Naive thymus-derived CD4-positive, alpha-beta T cell (primary cell): ENCODE measurements at regions of chr3 and their contacts with region 1.

Region 1: DNA sequence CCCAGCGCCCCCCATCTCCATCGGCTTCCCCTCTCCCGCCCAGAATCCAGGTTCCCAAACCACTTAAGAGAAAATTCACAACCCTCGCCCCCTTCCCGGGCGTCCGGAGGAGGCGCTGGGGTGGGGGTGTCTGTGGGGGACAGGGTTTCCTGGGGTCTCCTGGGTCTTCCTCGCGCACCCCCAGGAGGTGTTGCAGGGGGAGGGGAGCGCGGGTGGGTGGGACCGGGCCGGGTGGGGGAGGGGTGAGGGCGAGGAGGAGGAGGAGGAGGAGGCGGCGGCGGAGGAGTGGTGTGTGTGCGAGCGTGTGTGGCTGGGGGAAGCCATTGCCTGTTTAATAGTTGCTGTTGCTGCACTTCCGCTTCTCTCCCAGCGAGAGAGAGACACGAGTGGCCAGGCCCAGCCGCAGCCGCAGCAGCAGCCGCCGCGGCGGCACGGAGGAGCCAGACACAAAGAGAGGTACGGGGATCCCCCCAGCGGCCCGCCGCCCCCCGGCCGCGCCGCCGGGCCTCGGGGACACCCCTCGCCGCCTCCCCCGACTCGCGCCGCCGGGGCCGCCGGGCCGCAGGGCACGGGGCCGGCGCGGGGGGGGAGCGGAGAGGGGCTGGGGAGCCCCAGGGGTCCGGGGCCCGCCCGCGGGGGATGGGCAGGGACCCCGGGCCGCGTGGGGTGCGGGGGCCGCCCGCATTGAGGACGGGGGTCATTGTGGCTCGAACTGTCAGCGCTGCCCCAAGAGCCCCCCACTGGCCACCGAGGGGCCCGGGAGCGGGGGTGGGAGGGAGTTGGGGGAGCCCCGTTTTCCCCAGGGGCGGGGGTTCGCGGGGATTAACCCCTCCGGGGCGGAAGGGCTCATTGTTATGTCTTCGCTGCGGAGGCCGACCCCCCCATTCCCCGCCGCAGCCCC is at the start of gene UBE2E1:
- DNase-seq: peak; percentile 56 to 82 (median 73)
- ATAC-seq: peak; percentile 91
- H3K4me3 ChIP-seq: peak within 1 kb of the TSS; percentile 57
- H3K4me3 Mint-ChIP-seq: peak within 1 kb of the TSS; percentile 89 to 100 (median 94)
- H3K27ac ChIP-seq: peak within 1 kb of the TSS; percentile 77
- H3K27ac Mint-ChIP-seq: peak within 1 kb of the TSS; percentile 91 to 98 (median 95)
- H3K4me1 ChIP-seq: peaks cover 20 to 21% of the 10 kb centered on the region in 2 donors
- H3K4me1 Mint-ChIP-seq: peaks cover 28 to 48% (median 44%) of the 10 kb centered on the region in 7 donors
- H3K27me3 ChIP-seq: no peaks in the 10 kb centered on the region
- H3K27me3 Mint-ChIP-seq: peaks cover 0 to 31% (median 0%) of the 10 kb centered on the region in 5 donors
- total RNA-seq, gene UBE2E1: 59.0 to 80.0 (median 69.2) TPM

Region 2: DNA sequence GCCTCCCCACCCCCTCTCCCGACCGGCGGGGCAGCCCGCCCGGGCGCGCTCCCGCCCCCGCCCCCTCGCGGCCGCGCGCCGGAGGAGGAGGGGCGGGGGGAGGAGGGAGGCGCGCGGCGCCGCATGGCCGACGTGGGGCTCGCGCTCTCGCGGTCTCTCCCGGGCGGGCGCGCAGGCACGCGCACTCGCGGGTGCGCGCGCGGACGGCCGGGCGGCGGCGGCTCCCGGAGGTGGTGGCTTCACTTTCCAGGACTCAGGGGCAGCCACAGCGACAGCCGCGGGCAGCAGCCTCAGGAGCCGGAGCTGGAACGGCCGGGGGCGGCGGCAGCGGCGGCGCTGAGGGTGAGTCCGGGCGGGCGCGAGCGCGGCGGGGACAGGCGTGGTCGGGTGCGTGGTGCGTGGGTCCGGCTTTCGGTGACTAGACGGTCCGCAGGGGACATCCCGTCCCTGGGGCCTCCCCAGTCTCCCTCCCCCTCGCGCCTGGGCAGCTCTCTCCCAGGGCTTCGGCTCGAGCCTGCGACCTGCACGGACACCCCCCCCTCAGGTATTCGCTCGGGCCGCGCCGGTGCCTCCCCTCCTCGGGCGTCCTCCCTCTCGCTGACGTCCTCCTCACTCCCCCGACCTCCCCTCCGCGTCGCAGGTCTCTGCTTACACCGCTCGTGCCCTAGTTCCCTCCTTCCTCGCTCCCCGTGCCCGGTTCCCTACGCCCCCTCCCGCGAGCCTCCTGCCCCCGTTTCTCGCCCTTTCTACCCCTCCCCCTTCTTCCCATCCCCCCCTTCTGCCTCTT is 602.8 kb before region 1 on chr3 and contains the start of gene UBE2E2:
- CTCF ChIA-PET with region 1: no interaction called
- POLR2A ChIA-PET with region 1: no interaction called
- intact Hi-C with region 1: loop called in 1 of 2 experiments (anchors 1 kb)
- DNase-seq: peak; percentile 54 to 76 (median 72)
- ATAC-seq: peak; percentile 89
- H3K4me3 ChIP-seq: peak within 1 kb of the TSS; percentile 68
- H3K4me3 Mint-ChIP-seq: peak within 1 kb of the TSS; percentile 87 to 98 (median 94)
- H3K27ac ChIP-seq: peak within 1 kb of the TSS; percentile 76
- H3K27ac Mint-ChIP-seq: peak within 1 kb of the TSS; percentile 48 to 94 (median 85)
- H3K4me1 ChIP-seq: peaks cover 0 to 4% of the 10 kb centered on the region in 2 donors
- H3K4me1 Mint-ChIP-seq: peaks cover 14 to 32% (median 21%) of the 10 kb centered on the region in 7 donors
- H3K27me3 ChIP-seq: peaks cover 0 to 8% of the 10 kb centered on the region in 2 donors
- H3K27me3 Mint-ChIP-seq: peaks cover 0 to 38% (median 5%) of the 10 kb centered on the region in 5 donors
- total RNA-seq, gene UBE2E2: 2.4 to 28.8 (median 10.9) TPM

Region 3: GRCh38 chr3:23629181-23629893 is 176.5 kb before region 1 on chr3:
- CTCF ChIA-PET with region 1: no interaction called
- POLR2A ChIA-PET with region 1: no interaction called
- intact Hi-C with region 1: no loop called
- DNase-seq: no peak
- ATAC-seq: no peak
- H3K4me3 ChIP-seq: no peak overlapping the region
- H3K4me3 Mint-ChIP-seq: no peak overlapping the region
- H3K27ac ChIP-seq: no peak overlapping the region
- H3K27ac Mint-ChIP-seq: no peak overlapping the region
- H3K4me1 ChIP-seq: no peaks in the 10 kb centered on the region
- H3K4me1 Mint-ChIP-seq: peaks cover 0 to 5% (median 0%) of the 10 kb centered on the region in 7 donors
- H3K27me3 ChIP-seq: no peaks in the 10 kb centered on the region
- H3K27me3 Mint-ChIP-seq: peaks cover 0 to 15% (median 9%) of the 10 kb centered on the region in 5 donors

Region 4: DNA sequence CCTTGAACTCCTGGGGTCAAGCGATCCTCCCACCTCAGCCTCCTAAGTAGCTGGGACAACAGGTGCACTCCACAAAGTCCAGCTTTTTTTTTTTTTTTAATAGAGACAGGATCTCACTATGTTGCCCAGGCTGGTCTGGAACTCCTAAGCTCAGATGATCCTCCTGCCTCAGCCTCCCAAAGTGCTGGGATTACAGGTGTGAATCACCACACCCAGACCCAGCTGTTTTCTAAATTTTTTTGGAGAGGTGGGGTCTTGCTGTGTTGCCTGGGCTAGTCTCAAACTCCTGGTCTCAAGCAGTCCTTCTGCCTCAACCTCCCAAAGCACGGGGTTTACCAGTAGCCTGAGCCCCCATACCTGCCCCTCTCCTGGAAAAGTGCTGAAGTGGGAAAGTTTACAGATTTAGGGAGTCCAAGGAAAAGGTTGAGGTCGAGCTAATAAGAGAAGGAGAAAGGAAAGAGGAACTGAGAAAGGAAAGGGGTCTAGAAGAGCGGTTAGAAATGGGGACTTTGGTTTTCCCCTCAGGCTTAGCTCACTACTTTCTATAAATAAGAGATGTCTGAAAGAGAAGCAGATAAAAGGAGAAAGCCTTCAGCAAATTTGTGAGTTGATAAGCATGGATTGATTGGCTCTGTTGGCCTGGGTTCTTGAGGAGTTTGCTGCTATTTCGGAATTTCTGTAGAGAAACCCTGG is 23.5 kb after region 1 on chr3:
- CTCF ChIA-PET with region 1: no interaction called
- POLR2A ChIA-PET with region 1: no interaction called
- intact Hi-C with region 1: loop called in 1 of 2 experiments (anchors 2 kb)
- DNase-seq: no peak
- ATAC-seq: no peak
- H3K4me3 ChIP-seq: no peak overlapping the region
- H3K4me3 Mint-ChIP-seq: no peak overlapping the region
- H3K27ac ChIP-seq: no peak overlapping the region
- H3K27ac Mint-ChIP-seq: no peak overlapping the region
- H3K4me1 ChIP-seq: peaks cover 4 to 11% of the 10 kb centered on the region in 2 donors
- H3K4me1 Mint-ChIP-seq: peaks cover 30 to 82% (median 66%) of the 10 kb centered on the region in 7 donors
- H3K27me3 ChIP-seq: no peaks in the 10 kb centered on the region
- H3K27me3 Mint-ChIP-seq: no peaks in the 10 kb centered on the region

Region 5: DNA sequence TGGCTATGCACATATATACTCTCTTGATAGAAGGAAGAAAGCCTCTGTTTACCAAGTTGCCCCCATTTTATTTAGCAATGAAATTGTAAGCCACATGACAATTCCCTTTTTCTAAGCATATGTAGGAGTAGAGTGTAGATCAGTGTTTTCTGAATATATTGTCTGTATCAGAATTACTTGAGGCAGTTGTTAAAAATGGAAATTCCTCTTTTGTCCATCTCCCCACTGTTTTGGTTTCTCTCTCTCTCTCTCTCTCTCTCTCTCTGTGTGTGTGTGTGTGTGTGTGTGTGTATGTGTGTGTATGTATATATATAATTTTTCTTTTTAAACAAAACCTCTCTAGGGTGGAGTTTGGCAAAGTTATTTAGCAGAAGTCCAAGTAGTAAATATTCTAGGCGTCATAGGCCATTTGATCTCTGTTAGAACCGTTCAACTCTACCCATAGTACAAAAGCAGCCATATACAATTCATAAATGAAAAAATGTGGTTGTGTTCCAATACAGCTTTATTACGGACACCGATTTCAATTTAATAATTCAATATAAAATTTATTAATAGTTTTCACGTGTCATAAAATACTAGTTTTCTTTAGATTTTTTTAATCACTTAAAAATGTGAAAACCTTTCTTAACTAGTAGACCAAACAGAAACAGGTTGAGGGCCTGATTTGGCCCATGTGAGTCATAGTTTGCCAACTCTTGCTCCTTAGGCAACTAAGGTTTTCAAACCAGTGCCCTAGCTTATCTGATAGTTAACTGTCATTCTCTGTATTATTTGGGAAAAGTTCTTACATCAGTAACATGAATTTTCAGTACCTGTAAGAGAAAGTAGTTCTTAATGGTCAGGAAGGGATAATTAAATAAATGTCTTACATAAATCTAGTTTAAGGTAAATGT is 39.7 kb after region 1 on chr3:
- CTCF ChIA-PET with region 1: no interaction called
- POLR2A ChIA-PET with region 1: no interaction called
- intact Hi-C with region 1: no loop called
- DNase-seq: no peak
- ATAC-seq: no peak
- H3K4me3 ChIP-seq: no peak overlapping the region
- H3K4me3 Mint-ChIP-seq: no peak overlapping the region
- H3K27ac ChIP-seq: no peak overlapping the region
- H3K27ac Mint-ChIP-seq: no peak overlapping the region
- H3K4me1 ChIP-seq: no peaks in the 10 kb centered on the region
- H3K4me1 Mint-ChIP-seq: peaks cover 2 to 48% (median 39%) of the 10 kb centered on the region in 7 donors
- H3K27me3 ChIP-seq: no peaks in the 10 kb centered on the region
- H3K27me3 Mint-ChIP-seq: no peaks in the 10 kb centered on the region

Region 6: GRCh38 chr3:23888617-23889228 is 82.8 kb after region 1 on chr3:
- CTCF ChIA-PET with region 1: no interaction called
- POLR2A ChIA-PET with region 1: no interaction called
- intact Hi-C with region 1: loop called in 1 of 2 experiments (anchors 2 kb)
- DNase-seq: peak in 5 of 9 donors; percentile 24 to 47 (median 27)
- ATAC-seq: peak; percentile 76
- H3K4me3 ChIP-seq: no peak overlapping the region
- H3K4me3 Mint-ChIP-seq: no peak overlapping the region
- H3K27ac ChIP-seq: no peak overlapping the region
- H3K27ac Mint-ChIP-seq: peak overlapping the region in 4 of 9 donors; percentile 2 to 82 (median 36)
- H3K4me1 ChIP-seq: no peaks in the 10 kb centered on the region
- H3K4me1 Mint-ChIP-seq: peaks cover 0 to 4% (median 0%) of the 10 kb centered on the region in 7 donors
- H3K27me3 ChIP-seq: no peaks in the 10 kb centered on the region
- H3K27me3 Mint-ChIP-seq: no peaks in the 10 kb centered on the region

Region 7: DNA sequence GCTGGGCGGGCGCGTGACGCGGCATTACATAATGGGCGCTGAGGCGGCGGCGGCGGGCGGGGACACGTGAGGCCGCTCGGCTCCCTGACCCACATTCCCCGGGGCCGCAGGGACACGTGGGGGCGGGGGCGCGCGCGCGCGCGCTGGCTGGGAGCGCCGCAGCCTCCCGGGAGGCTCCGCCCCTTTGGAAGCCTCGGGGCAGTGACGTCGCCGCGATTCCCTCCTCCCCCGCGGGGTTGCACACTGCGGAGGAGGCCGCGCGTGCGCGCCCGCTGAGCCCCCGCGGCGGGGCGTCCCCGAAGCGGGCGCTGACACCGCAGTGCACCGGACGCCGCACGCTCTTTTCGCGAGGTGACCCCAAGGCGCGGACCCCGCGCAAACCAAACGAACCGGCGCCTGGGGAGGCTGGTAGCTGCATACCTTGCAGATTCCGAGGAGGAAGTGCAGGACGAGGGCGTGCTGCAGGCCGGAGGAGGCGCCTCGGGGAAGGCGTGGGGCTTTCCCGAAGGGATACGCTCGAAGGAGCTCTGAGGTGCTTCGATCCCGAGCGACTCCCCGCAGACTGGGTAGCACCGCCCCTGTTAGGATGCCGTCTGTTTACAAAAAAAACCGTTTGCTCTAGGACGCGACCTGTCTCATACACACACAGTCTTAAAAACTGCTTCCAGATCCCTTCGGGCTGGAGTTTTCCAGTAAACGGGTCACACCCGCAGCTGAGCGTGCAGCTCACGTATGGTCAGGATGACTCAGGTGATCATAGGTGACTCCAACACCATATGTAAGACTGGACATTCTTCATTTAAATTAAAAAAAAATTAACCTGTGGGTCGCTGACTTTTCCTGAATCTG is 140.2 kb after region 1 on chr3:
- CTCF ChIA-PET with region 1: no interaction called
- POLR2A ChIA-PET with region 1: no interaction called
- intact Hi-C with region 1: loop called (anchors 1 kb)
- DNase-seq: peak; percentile 93 to 98 (median 97)
- ATAC-seq: peak; percentile 89
- H3K4me3 ChIP-seq: peak overlapping the region; percentile 79
- H3K4me3 Mint-ChIP-seq: peak overlapping the region; percentile 70 to 90 (median 87)
- H3K27ac ChIP-seq: peak overlapping the region; percentile 81
- H3K27ac Mint-ChIP-seq: peak overlapping the region; percentile 53 to 95 (median 90)
- H3K4me1 ChIP-seq: peaks cover 28 to 31% of the 10 kb centered on the region in 2 donors
- H3K4me1 Mint-ChIP-seq: peaks cover 30 to 61% (median 48%) of the 10 kb centered on the region in 7 donors
- H3K27me3 ChIP-seq: no peaks in the 10 kb centered on the region
- H3K27me3 Mint-ChIP-seq: peaks cover 0 to 41% (median 0%) of the 10 kb centered on the region in 5 donors

Region 8: GRCh38 chr3:25789596-25790556 is 1984.0 kb after region 1 on chr3 and contains the start of gene OXSM:
- CTCF ChIA-PET with region 1: no interaction called
- POLR2A ChIA-PET with region 1: no interaction called
- intact Hi-C with region 1: loop called in 1 of 2 experiments (anchors 5 kb)
- DNase-seq: peak; percentile 66 to 92 (median 86)
- ATAC-seq: peak; percentile 96
- H3K4me3 ChIP-seq: peak within 1 kb of the TSS; percentile 80
- H3K4me3 Mint-ChIP-seq: peak within 1 kb of the TSS; percentile 87 to 100 (median 98)
- H3K27ac ChIP-seq: peak within 1 kb of the TSS; percentile 91
- H3K27ac Mint-ChIP-seq: peak within 1 kb of the TSS; percentile 81 to 100 (median 98)
- H3K4me1 ChIP-seq: peaks cover 6 to 20% of the 10 kb centered on the region in 2 donors
- H3K4me1 Mint-ChIP-seq: peaks cover 14 to 59% (median 52%) of the 10 kb centered on the region in 7 donors
- H3K27me3 ChIP-seq: no peaks in the 10 kb centered on the region
- H3K27me3 Mint-ChIP-seq: no peaks in the 10 kb centered on the region
- total RNA-seq, gene OXSM: 10.6 to 16.5 (median 13.2) TPM